ENCODE measurements at regions of chrX and their contacts with region 1.

Region 1: DNA sequence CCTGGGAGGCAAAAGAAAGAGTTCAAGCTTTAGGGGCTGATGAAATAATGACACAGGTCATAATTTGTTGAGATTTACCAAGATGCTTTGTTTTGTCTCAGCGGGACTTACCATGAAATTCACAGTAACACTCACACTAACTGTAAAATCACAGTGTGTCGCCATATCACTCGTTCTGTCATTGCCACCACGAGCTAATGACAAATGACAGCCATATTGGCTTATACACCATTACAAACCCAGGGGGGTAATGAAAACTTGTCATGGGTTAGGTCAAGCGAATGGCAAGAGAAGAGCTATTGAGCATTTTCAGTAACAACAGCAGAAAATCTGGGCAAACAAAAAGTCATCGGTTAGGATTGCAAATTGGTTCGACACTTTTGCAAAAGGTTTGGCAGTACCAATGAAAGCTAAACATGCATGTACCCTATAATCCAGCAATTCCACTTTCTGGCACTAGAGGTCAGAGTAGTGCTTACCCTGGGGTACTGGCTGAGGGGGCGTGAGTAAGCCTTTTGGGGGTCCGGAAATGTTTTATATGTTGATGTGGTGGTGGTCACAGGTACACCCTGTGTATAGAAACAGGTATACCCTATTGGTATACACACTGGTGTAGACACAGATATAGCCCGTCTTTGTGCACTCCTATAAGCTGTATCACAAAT is 83.9 kb upstream of the RAI2 start:
- DNase-seq: no peak
- H3K4me3 ChIP-seq: no peak overlapping the region
- H3K27ac ChIP-seq: no peak overlapping the region
- H3K4me1 ChIP-seq: no peaks in the 10 kb centered on the region
- H3K27me3 ChIP-seq: no peaks in the 10 kb centered on the region
- CTCF ChIP-seq: peak in 1 of 4 experiments; percentile 37
- POLR2A ChIP-seq: no peak

Region 2: DNA sequence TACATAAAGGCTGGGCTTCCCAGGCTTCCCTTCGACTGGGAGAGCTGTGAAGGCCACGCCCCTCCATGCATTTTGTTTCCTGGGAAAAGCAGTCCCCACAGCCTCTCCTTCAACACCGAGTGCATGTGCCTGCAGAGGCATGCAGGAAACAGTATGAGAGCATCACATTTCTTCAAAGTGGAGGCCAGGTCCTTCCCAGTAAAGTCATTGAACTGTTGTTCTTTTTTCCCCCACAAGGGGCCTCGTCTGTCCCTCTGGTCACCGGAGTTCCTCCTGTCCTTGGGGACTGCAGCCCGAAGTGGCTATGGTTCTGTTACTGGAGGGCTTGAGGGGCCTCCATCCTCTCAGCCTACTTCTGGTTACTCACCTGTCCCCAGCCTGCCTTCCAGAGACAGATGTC is 139.8 kb before region 1 on chrX:
- intact Hi-C with region 1: loop called (anchors 5 kb)
- DNase-seq: no peak
- H3K4me3 ChIP-seq: no peak overlapping the region
- H3K27ac ChIP-seq: no peak overlapping the region
- H3K4me1 ChIP-seq: no peaks in the 10 kb centered on the region
- H3K27me3 ChIP-seq: no peaks in the 10 kb centered on the region
- CTCF ChIP-seq: no peak
- POLR2A ChIP-seq: no peak

Measured in uterus (tissue), 4 donors.